A549 (cell line): ENCODE measurements at regions of chr9 and their contacts with region 1.

Region 1: GRCh38 chr9:34437006-34437925 is 21.1 kb downstream of the FAM219A start:
- DNase-seq: peak; percentile 51 to 87
- ATAC-seq: peak; percentile 95 to 98
- H3K4me3 ChIP-seq: no peak overlapping the region
- H3K27ac ChIP-seq: no peak overlapping the region
- H3K4me1 ChIP-seq: no peaks in the 10 kb centered on the region
- CTCF ChIP-seq: peak; percentile 87
- EP300 ChIP-seq: no peak
- POLR2A ChIP-seq: no peak
- RAD21 ChIP-seq: peak; percentile 86 to 92

Region 2: GRCh38 chr9:34206561-34206960 is 230.7 kb before region 1 on chr9:
- CTCF ChIA-PET with region 1: no interaction called
- POLR2A ChIA-PET with region 1: no interaction called
- DNase-seq: no peak
- ATAC-seq: no peak
- H3K4me3 ChIP-seq: no peak overlapping the region
- H3K27ac ChIP-seq: no peak overlapping the region
- H3K4me1 ChIP-seq: peaks cover 39% of the 10 kb centered on the region
- CTCF ChIP-seq: no peak
- EP300 ChIP-seq: no peak
- POLR2A ChIP-seq: no peak
- RAD21 ChIP-seq: no peak

Region 3: GRCh38 chr9:34271265-34272006 is 165.8 kb before region 1 on chr9:
- CTCF ChIA-PET with region 1: no interaction called
- POLR2A ChIA-PET with region 1: no interaction called
- DNase-seq: no peak
- ATAC-seq: no peak
- H3K4me3 ChIP-seq: no peak overlapping the region
- H3K27ac ChIP-seq: no peak overlapping the region
- H3K4me1 ChIP-seq: no peaks in the 10 kb centered on the region
- CTCF ChIP-seq: no peak
- EP300 ChIP-seq: no peak
- POLR2A ChIP-seq: no peak
- RAD21 ChIP-seq: no peak

Region 4: DNA sequence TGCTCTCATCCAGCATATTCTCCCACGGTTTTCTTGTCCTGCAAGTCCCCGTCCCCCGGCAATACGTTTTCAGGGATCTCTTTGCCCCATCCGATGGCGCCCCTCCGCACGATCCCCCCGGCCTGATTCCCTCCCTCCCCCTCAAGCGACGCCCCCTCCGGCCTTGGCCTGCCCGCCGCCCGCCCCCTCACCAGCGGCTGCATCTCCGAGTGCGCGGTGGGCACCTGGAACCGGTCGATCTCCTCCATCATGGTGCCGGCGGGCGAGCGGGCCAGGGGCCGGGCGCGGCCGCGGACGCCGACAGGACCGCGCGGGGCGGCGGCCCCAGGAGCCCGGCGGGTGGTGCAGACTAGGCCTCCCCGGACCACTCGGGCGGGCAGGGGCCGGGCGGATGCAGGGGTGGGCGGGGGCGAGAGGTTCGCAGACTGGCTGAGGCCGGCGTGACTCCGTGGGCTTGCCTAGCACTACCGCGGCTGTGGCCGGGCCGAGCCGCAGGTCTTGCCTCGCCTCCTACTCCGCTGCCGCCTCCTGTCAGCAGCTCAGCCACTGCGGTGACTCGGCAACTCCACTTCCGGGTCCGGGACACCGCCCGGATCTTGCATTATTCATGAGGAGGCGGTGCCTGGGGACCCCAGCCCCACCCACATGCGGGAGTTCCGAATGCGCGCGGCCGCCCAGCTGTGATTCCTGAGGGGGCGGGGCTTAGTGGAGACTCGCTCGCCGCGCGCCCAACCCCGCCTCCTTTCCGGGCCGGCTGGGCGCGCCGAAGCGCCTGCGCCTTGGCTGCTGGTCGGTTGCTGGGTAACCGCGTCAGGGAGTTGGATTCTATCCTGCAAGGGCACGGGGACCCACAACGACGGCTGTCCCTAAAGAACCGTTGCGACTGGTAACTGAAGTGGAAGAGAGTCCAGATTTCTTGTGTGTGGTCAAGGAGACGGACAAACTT is 21.0 kb after region 1 on chr9 and contains the starts of genes DNAI1 and FAM219A:
- CTCF ChIA-PET with region 1: interaction called, 51 read pairs
- POLR2A ChIA-PET with region 1: no interaction called
- DNase-seq: peak; percentile 94 to 98
- ATAC-seq: peak; percentile 92 to 95
- H3K4me3 ChIP-seq: peak within 1 kb of the TSS; percentile 87
- H3K27ac ChIP-seq: peak within 1 kb of the TSS; percentile 84 to 94
- H3K4me1 ChIP-seq: peaks cover 17% of the 10 kb centered on the region; the same call in 2 of the 3 replicates
- CTCF ChIP-seq: no peak
- EP300 ChIP-seq: no peak
- POLR2A ChIP-seq: peak; percentile 78
- RAD21 ChIP-seq: no peak
- polyA plus RNA-seq, gene DNAI1: 0.16 and 0.27 TPM in 2 replicates
- polyA plus RNA-seq, gene FAM219A: 8.1 and 10.4 TPM in 2 replicates

Region 5: DNA sequence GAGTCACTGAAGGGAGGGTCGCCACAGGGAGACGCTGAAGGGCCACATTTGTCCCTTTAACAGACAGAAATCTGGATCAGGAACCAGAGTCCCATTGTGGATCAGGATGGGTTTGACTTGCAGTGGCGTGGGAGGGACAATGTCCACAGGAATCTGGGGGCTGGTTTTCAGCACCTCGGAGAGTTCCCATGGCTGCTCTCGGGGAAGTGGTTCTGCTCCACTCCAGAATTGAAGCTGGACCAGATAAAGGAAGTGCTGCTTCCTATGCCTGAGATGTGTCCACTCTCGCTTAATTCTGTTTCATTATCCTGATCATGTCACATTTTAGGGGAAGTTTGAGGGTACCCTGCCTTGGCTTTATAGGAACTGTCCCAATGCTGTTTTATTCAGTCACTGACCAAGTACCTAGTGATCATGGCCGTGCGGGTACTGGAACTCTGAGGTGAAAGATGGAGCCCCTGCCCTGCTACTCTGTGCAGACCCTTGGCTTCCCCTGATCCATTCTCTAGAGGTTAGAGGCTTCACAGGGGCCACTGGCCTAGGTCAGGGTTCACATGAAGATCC is 56.8 kb after region 1 on chr9:
- CTCF ChIA-PET with region 1: interaction called, 38 read pairs
- POLR2A ChIA-PET with region 1: no interaction called
- DNase-seq: peak; percentile 19 to 20
- ATAC-seq: no peak
- H3K4me3 ChIP-seq: no peak overlapping the region
- H3K27ac ChIP-seq: no peak overlapping the region
- H3K4me1 ChIP-seq: no peaks in the 10 kb centered on the region
- CTCF ChIP-seq: no peak
- EP300 ChIP-seq: no peak
- POLR2A ChIP-seq: no peak
- RAD21 ChIP-seq: no peak